CD8-positive, alpha-beta T cell (primary cell): ENCODE measurements at regions of chr13 and their contacts with region 1.

Region 1: DNA sequence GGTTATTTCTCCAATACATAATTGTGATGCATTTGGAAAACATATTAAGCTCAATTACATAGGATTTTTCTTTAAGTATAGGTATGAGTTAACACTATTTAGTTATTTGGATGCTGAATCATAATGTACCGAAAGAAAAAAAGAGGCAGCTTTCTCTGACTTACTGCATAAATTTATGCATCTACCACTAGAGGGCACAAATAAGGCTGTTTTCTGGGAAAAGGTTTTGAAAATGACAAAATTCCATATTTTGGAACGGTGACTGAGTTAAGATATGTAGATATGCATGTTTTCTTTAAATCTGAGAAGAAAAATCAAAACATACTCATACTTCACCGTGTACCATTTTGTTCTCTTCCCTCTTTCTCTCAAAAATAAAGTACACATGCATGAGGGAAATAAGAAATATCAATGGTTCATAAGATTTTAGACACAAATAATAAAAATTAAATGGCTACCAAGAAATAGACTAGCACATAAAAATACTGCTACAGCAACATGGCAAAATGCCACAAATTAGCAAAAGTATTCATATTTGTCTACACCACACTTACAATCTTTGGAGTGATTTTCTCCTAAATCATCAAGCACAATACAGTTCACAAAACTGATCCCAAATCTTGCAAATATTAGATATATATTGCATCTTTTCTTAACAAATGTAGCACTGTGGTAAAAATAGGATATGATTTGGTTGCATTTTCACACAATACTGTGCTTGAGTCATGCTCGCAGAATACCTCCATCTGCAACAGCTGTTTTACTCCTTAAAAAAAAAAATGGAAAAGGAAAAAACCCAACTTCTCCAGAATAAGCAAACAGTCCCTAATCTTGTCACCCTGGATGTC is 260.0 kb downstream of the FGF14 start:
- DNase-seq: no peak
- ATAC-seq: no peak
- H3K4me3 ChIP-seq: no peak overlapping the region
- H3K4me3 Mint-ChIP-seq: no peak overlapping the region
- H3K27ac ChIP-seq: no peak overlapping the region
- H3K27ac Mint-ChIP-seq: no peak overlapping the region
- H3K4me1 ChIP-seq: no peaks in the 10 kb centered on the region
- H3K4me1 Mint-ChIP-seq: no peaks in the 10 kb centered on the region
- H3K27me3 ChIP-seq: no peaks in the 10 kb centered on the region
- H3K27me3 Mint-ChIP-seq: no peaks in the 10 kb centered on the region
- CTCF ChIP-seq: peak; percentile 43

Region 2: GRCh38 chr13:101492251-101492910 is 649.5 kb before region 1 on chr13:
- CTCF ChIA-PET with region 1: no interaction called
- POLR2A ChIA-PET with region 1: no interaction called
- intact Hi-C with region 1: no loop called
- DNase-seq: no peak
- ATAC-seq: no peak
- H3K4me3 ChIP-seq: no peak overlapping the region
- H3K4me3 Mint-ChIP-seq: no peak overlapping the region
- H3K27ac ChIP-seq: no peak overlapping the region
- H3K27ac Mint-ChIP-seq: no peak overlapping the region
- H3K4me1 ChIP-seq: no peaks in the 10 kb centered on the region
- H3K4me1 Mint-ChIP-seq: no peaks in the 10 kb centered on the region
- H3K27me3 ChIP-seq: no peaks in the 10 kb centered on the region
- H3K27me3 Mint-ChIP-seq: peaks cover 3% of the 10 kb centered on the region
- CTCF ChIP-seq: no peak

Region 3: DNA sequence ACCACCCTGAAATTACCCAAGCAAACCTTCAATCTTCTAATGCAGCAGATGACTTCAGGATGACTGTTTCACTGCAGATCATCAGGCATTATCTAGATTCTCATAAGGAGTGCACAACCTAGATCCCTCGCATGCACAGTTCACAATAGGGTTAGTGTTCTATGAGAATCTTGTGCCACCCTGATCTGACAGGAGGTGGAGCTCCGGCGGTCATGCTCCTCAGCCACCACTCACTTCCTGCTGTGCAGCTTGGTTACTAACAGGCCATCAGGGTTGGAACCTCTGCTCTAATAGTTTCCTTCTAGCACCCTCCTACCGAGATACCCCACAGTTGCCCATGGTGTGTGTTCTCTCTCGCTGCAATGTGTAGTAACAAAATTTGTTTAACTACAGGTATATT is 182.8 kb before region 1 on chr13:
- CTCF ChIA-PET with region 1: no interaction called
- POLR2A ChIA-PET with region 1: no interaction called
- intact Hi-C with region 1: no loop called
- DNase-seq: no peak
- ATAC-seq: no peak
- H3K4me3 ChIP-seq: no peak overlapping the region
- H3K4me3 Mint-ChIP-seq: no peak overlapping the region
- H3K27ac ChIP-seq: no peak overlapping the region
- H3K27ac Mint-ChIP-seq: no peak overlapping the region
- H3K4me1 ChIP-seq: no peaks in the 10 kb centered on the region
- H3K4me1 Mint-ChIP-seq: no peaks in the 10 kb centered on the region
- H3K27me3 ChIP-seq: no peaks in the 10 kb centered on the region
- H3K27me3 Mint-ChIP-seq: no peaks in the 10 kb centered on the region
- CTCF ChIP-seq: no peak

Region 4: DNA sequence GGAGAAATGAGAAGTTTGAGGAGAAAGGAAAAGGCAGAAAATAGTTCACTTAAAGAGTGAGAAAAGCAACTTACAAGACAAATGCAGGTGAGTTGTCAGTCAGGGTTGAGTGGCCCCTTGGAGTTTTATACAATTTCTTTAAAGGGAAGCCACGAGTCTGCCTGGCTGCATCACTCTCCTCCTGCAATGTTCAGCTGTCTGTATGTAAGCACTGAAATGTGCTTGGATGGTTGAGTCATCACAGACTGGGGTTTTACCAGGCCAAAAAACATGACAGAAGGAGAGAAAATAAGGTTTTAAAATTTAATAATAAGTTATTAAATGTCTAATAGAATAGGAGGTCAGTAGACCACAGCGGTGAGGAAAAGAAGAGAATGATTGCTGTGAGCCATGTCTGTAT is 311.0 kb after region 1 on chr13:
- CTCF ChIA-PET with region 1: no interaction called
- POLR2A ChIA-PET with region 1: interaction called, 3 read pairs
- intact Hi-C with region 1: loop called in 1 of 2 experiments (anchors 10 kb)
- DNase-seq: no peak
- ATAC-seq: no peak
- H3K4me3 ChIP-seq: no peak overlapping the region
- H3K4me3 Mint-ChIP-seq: no peak overlapping the region
- H3K27ac ChIP-seq: no peak overlapping the region
- H3K27ac Mint-ChIP-seq: no peak overlapping the region
- H3K4me1 ChIP-seq: no peaks in the 10 kb centered on the region
- H3K4me1 Mint-ChIP-seq: peaks cover 5% of the 10 kb centered on the region
- H3K27me3 ChIP-seq: no peaks in the 10 kb centered on the region
- H3K27me3 Mint-ChIP-seq: peaks cover 3% of the 10 kb centered on the region
- CTCF ChIP-seq: no peak

Region 5: GRCh38 chr13:102555917-102556553 is 414.2 kb after region 1 on chr13:
- CTCF ChIA-PET with region 1: interaction called, 3 read pairs
- POLR2A ChIA-PET with region 1: no interaction called
- intact Hi-C with region 1: loop called in 1 of 2 experiments (anchors 5 kb)
- DNase-seq: peak in 2 of 9 experiments; percentile 37 to 45
- ATAC-seq: peak; percentile 42
- H3K4me3 ChIP-seq: no peak overlapping the region
- H3K4me3 Mint-ChIP-seq: no peak overlapping the region
- H3K27ac ChIP-seq: no peak overlapping the region
- H3K27ac Mint-ChIP-seq: no peak overlapping the region
- H3K4me1 ChIP-seq: no peaks in the 10 kb centered on the region
- H3K4me1 Mint-ChIP-seq: no peaks in the 10 kb centered on the region
- H3K27me3 ChIP-seq: no peaks in the 10 kb centered on the region
- H3K27me3 Mint-ChIP-seq: peaks cover 10% of the 10 kb centered on the region
- CTCF ChIP-seq: peak; percentile 52

Region 6: DNA sequence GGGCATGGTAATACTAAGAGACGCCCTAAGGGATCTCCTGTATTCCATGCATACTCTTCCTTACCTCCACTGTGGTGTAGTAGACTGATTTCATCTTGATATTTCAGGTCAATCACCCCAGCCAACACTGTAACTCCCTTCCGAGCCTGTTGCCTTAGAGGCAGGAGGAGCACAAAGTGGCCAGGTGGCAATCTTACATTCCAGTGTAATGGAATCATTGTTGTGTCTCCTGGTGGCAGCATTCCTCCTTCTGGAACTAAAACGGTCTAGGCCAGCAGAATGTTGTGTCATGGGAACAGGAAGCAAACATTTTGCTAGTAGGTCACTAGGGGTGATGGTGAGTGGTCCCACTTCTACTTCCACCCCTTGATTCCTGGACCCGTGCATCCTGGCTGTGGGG is 1330.0 kb after region 1 on chr13:
- CTCF ChIA-PET with region 1: no interaction called
- POLR2A ChIA-PET with region 1: no interaction called
- intact Hi-C with region 1: no loop called
- DNase-seq: no peak
- ATAC-seq: no peak
- H3K4me3 ChIP-seq: no peak overlapping the region
- H3K4me3 Mint-ChIP-seq: no peak overlapping the region
- H3K27ac ChIP-seq: no peak overlapping the region
- H3K27ac Mint-ChIP-seq: no peak overlapping the region
- H3K4me1 ChIP-seq: no peaks in the 10 kb centered on the region
- H3K4me1 Mint-ChIP-seq: no peaks in the 10 kb centered on the region
- H3K27me3 ChIP-seq: no peaks in the 10 kb centered on the region
- H3K27me3 Mint-ChIP-seq: no peaks in the 10 kb centered on the region
- CTCF ChIP-seq: no peak